Left ventricle myocardium inferior (tissue), 1 donor: ENCODE measurements at regions of chr1 and their contacts with region 1.

Region 1: GRCh38 chr1:231866392-231867331 is 240.1 kb downstream of the DISC1 start:
- DNase-seq: peak; percentile 38
- H3K4me3 ChIP-seq: no peak overlapping the region
- H3K27ac ChIP-seq: no peak overlapping the region
- H3K4me1 ChIP-seq: peaks cover 48% of the 10 kb centered on the region
- H3K27me3 ChIP-seq: no peaks in the 10 kb centered on the region
- CTCF ChIP-seq: peak; percentile 91

Region 2: GRCh38 chr1:231949277-231950091 is 82.8 kb after region 1 on chr1:
- intact Hi-C with region 1: no loop called
- DNase-seq: peak; percentile 29
- H3K4me3 ChIP-seq: no peak overlapping the region
- H3K27ac ChIP-seq: peak overlapping the region; percentile 61
- H3K4me1 ChIP-seq: peaks cover 7% of the 10 kb centered on the region
- H3K27me3 ChIP-seq: no peaks in the 10 kb centered on the region
- CTCF ChIP-seq: no peak

Region 3: DNA sequence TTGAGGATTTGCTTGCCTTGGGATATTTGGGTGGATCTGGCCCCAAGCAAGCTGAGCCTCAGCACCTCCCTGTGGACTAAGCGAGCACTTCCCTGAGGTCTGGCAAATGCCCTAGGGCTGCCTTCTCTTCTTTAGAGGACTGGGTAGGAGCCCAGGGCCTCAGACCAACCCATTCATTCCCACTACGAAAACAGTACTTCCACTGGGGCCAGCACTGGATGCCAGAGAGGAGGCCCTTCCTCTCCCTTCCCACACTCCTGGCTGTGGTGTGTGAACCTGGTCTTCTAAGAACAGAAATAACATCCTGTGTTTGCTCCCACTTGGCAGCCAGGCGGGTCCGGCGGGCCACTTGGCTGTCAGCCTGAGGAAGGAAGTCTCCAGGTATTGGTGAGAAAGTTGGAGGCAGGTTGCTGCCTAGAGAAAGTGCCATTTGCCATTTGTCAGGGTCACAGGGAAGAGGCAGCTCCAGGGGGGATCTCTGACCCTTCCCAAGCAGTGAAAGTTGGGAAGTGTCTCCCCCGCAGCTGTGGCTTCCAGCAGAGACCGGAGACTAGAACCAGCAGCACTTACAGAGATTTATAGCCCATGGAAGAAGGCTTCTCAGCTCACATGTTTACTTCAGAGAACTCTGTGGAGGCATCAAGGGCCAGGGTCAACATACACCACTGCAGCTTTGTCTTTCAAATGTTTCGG is 439.8 kb after region 1 on chr1:
- intact Hi-C with region 1: loop called (anchors 10 kb)
- DNase-seq: peak; percentile 42
- H3K4me3 ChIP-seq: no peak overlapping the region
- H3K27ac ChIP-seq: peak overlapping the region; percentile 62
- H3K4me1 ChIP-seq: peaks cover 26% of the 10 kb centered on the region
- H3K27me3 ChIP-seq: no peaks in the 10 kb centered on the region
- CTCF ChIP-seq: peak; percentile 55